ENCODE measurements at regions of chr6 and their contacts with region 1.

Region 1: DNA sequence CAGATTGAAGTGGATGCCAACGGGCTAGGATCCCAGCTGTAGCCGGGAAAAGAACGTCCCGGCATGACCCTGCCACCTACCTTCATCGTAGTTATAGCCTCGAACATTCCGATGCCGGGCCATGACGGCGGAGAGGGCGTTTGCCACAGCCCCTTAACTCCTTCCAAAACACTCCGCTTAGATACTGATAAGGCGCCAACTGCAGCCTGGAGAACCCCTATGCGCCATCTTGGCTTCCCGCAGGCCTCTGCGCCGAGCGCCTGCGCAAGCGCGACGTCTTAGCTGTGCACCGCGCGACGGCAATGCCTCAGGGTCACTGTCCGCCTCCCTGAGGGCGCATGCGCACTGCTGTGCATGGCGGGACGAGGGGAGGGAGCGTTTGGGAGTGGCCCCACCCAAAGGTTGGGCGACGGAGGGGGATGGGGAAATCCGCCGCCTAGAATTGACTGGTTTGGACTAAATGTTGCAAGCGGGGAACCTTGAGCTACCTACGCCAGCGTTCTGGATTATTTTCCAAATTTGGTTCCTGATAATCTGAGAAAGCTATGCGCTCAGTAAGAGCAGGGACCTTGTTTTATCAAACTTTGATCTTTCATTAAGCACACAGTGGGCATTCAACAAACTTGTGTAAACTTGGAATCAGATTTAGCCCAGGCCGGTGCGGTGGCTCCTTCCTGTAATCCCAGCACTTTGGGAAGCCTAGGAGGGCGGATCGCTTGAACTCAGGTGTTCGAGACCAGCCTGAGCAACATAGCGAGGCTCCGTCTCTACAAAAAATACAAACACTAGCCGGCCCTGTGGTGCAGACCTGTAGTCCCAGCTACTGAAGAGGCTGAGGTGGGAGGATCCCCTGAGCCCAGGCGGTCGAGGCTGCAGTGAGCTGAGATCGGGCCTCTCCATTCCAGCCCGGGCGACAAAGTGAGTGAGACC is at the start of gene HBS1L:
- DNase-seq: peak; percentile 92 to 100 (median 96)
- ATAC-seq: peak; percentile 96
- H3K4me3 ChIP-seq: peak within 1 kb of the TSS; percentile 86
- H3K4me3 Mint-ChIP-seq: peak within 1 kb of the TSS; percentile 96
- H3K27ac ChIP-seq: peak within 1 kb of the TSS; percentile 90 to 94
- H3K27ac Mint-ChIP-seq: peak within 1 kb of the TSS; percentile 99
- H3K4me1 ChIP-seq: peaks cover 16% of the 10 kb centered on the region
- H3K4me1 Mint-ChIP-seq: peaks cover 46% of the 10 kb centered on the region
- H3K27me3 ChIP-seq: no peaks in the 10 kb centered on the region
- H3K27me3 Mint-ChIP-seq: no peaks in the 10 kb centered on the region
- CTCF ChIP-seq: no peak
- total RNA-seq, gene HBS1L: 106 to 117 TPM

Region 2: GRCh38 chr6:135021310-135022049 is 33.4 kb before region 1 on chr6:
- CTCF ChIA-PET with region 1: no interaction called
- POLR2A ChIA-PET with region 1: interaction called, 10 read pairs
- intact Hi-C with region 1: no loop called
- DNase-seq: no peak
- ATAC-seq: no peak
- H3K4me3 ChIP-seq: no peak overlapping the region
- H3K4me3 Mint-ChIP-seq: peak overlapping the region; percentile 22
- H3K27ac ChIP-seq: peak overlapping the region in 1 of 2 donors; percentile 14
- H3K27ac Mint-ChIP-seq: peak overlapping the region; percentile 59
- H3K4me1 ChIP-seq: no peaks in the 10 kb centered on the region
- H3K4me1 Mint-ChIP-seq: peaks cover 76% of the 10 kb centered on the region
- H3K27me3 ChIP-seq: no peaks in the 10 kb centered on the region
- H3K27me3 Mint-ChIP-seq: no peaks in the 10 kb centered on the region
- CTCF ChIP-seq: no peak

Region 3: GRCh38 chr6:135081966-135082365 is 27.1 kb after region 1 on chr6:
- CTCF ChIA-PET with region 1: no interaction called
- POLR2A ChIA-PET with region 1: interaction called, 57 read pairs
- intact Hi-C with region 1: loop called in 1 of 2 experiments (anchors 2 kb)
- DNase-seq: no peak
- ATAC-seq: no peak
- H3K4me3 ChIP-seq: no peak overlapping the region
- H3K4me3 Mint-ChIP-seq: no peak overlapping the region
- H3K27ac ChIP-seq: no peak overlapping the region
- H3K27ac Mint-ChIP-seq: no peak overlapping the region
- H3K4me1 ChIP-seq: peaks cover 6% of the 10 kb centered on the region
- H3K4me1 Mint-ChIP-seq: peaks cover 28% of the 10 kb centered on the region
- H3K27me3 ChIP-seq: no peaks in the 10 kb centered on the region
- H3K27me3 Mint-ChIP-seq: no peaks in the 10 kb centered on the region
- CTCF ChIP-seq: no peak

Region 4: DNA sequence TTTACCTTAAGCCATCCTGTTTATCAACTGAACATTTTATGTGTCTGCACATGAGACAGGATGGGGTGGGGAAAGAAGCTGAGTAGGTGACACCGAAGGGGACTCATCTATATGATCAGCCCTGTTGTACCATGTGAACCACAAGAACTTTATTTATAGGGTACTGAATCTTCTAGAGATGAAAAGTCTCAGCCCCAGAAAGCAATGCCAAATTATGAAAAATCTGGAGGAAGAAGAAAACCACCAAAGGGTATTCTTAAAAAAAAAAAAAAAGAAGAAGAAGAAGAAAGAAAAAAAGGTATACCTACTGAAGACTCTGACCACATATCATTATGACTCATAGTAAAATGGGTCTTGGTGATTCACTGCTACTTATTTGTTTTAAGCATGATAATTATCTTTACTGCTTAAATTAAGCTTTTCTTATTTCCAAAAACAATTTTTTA is 39.6 kb after region 1 on chr6:
- CTCF ChIA-PET with region 1: interaction called, 3 read pairs
- POLR2A ChIA-PET with region 1: interaction called, 14 read pairs
- intact Hi-C with region 1: no loop called
- DNase-seq: peak in 11 of 14 experiments; percentile 12 to 79 (median 42)
- ATAC-seq: peak; percentile 91
- H3K4me3 ChIP-seq: no peak overlapping the region
- H3K4me3 Mint-ChIP-seq: peak overlapping the region; percentile 58
- H3K27ac ChIP-seq: peak overlapping the region; percentile 46 to 60
- H3K27ac Mint-ChIP-seq: peak overlapping the region; percentile 90
- H3K4me1 ChIP-seq: peaks cover 22% of the 10 kb centered on the region
- H3K4me1 Mint-ChIP-seq: peaks cover 65% of the 10 kb centered on the region
- H3K27me3 ChIP-seq: no peaks in the 10 kb centered on the region
- H3K27me3 Mint-ChIP-seq: no peaks in the 10 kb centered on the region
- CTCF ChIP-seq: no peak

Region 5: DNA sequence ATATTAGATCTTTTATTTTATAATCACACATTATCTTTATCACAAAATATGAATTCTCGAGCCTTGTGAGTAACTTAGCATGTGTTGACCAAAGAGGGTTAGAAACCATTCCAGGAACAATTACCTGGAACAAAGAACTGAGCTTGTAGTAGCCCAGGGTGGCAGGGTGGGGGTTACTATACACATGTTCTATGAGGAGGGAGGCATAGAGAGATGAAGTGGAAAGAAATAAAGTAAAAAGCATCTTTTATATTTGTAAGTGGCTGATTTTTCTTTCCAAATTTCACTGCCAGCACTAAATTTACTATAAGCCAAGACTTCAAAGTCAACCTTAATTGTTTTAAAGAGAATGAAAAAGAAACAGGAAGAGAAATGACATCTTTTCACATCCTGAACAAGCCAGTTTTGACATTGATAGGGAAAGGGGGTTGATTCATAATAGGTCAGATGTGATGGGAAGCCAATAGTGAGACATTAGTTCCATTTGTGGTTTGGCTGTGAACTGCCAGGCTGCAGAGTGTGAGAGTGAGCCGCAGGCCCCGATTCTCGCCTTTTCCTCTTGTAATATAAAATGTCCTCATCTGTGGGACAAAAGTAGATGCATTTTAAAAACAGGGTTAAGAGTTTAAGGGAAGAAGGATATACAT is 73.6 kb after region 1 on chr6:
- CTCF ChIA-PET with region 1: no interaction called
- POLR2A ChIA-PET with region 1: interaction called, 14 read pairs
- intact Hi-C with region 1: no loop called
- DNase-seq: peak in 11 of 14 experiments; percentile 14 to 88 (median 40)
- ATAC-seq: peak; percentile 96
- H3K4me3 ChIP-seq: no peak overlapping the region
- H3K4me3 Mint-ChIP-seq: peak overlapping the region; percentile 75
- H3K27ac ChIP-seq: peak overlapping the region; percentile 55 to 73
- H3K27ac Mint-ChIP-seq: peak overlapping the region; percentile 91
- H3K4me1 ChIP-seq: peaks cover 21% of the 10 kb centered on the region
- H3K4me1 Mint-ChIP-seq: peaks cover 39% of the 10 kb centered on the region
- H3K27me3 ChIP-seq: no peaks in the 10 kb centered on the region
- H3K27me3 Mint-ChIP-seq: no peaks in the 10 kb centered on the region
- CTCF ChIP-seq: no peak

Region 6: DNA sequence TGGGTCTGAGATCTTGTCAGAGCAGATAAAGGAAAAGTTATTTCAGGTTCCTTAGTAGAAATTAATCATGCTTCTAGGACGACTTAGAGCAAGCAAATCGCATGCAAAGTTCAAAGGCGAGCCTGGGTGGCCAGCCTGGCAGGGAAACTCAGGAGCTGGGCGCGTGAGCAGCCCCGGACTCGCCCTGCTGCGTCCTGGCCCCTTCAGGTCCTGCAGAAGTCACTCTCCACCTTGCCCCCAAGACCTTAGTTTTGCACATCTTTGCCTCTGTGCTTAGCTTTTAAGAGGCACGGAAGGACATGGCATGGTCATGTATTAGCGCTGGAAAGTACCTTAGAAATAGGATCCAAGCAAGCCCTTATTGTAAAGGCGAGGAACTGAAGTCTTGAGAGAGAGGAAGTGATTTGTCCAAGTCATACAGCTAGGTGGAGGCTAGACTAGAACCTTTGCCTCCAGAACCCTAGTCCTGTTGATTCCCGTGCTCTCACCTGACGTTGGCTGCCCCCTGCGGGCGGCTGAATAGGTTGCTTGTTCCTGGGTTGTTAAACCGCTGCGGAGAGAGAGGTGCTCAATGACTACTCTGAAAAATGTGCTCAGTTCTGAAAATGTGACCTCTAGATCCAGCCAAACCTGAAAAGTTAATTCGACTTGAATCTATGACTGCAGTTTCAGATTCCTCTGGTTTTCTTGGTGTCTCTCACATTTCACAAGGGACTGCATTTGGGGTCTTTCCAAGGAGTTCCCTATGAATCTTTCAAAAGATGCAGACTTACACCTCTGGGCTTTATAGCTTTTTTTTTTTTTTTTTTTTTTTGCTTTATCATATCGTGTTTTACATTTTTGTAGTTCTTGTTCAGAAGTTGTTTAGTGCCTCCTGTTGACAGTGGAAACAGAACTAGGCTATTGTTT is 129.0 kb after region 1 on chr6:
- CTCF ChIA-PET with region 1: interaction called, 12 read pairs
- POLR2A ChIA-PET with region 1: interaction called, 31 read pairs
- intact Hi-C with region 1: loop called in 1 of 2 experiments (anchors 5 kb)
- DNase-seq: peak; percentile 59 to 89 (median 76)
- ATAC-seq: peak; percentile 57
- H3K4me3 ChIP-seq: peak overlapping the region; percentile 71
- H3K4me3 Mint-ChIP-seq: peak overlapping the region; percentile 94
- H3K27ac ChIP-seq: peak overlapping the region in 1 of 2 donors; percentile 24
- H3K27ac Mint-ChIP-seq: peak overlapping the region; percentile 57
- H3K4me1 ChIP-seq: peaks cover 26% of the 10 kb centered on the region
- H3K4me1 Mint-ChIP-seq: peaks cover 36% of the 10 kb centered on the region
- H3K27me3 ChIP-seq: no peaks in the 10 kb centered on the region
- H3K27me3 Mint-ChIP-seq: no peaks in the 10 kb centered on the region
- CTCF ChIP-seq: peak; percentile 67

Measured in CD4-positive, alpha-beta T cell (primary cell).